T-cell (primary cell): ENCODE measurements at regions of chr2 and their contacts with region 1.

Region 1: GRCh38 chr2:171247741-171248662 is 87.3 kb upstream of the TLK1 start:
- DNase-seq: peak in 33 of 35 experiments; percentile 3 to 68 (median 35)
- ATAC-seq: peak; percentile 88 to 98 (median 96)
- H3K4me3 ChIP-seq: no peak overlapping the region
- H3K4me3 Mint-ChIP-seq: peak overlapping the region; percentile 34 to 49 (median 37)
- H3K27ac ChIP-seq: peak overlapping the region; percentile 52
- H3K27ac Mint-ChIP-seq: peak overlapping the region; percentile 75 to 90
- H3K4me1 ChIP-seq: peaks cover 18 to 20% of the 10 kb centered on the region in 2 experiments
- H3K4me1 Mint-ChIP-seq: peaks cover 45 to 51% (median 50%) of the 10 kb centered on the region in 3 donors
- H3K27me3 ChIP-seq: no peaks in the 10 kb centered on the region
- H3K27me3 Mint-ChIP-seq: no peaks in the 10 kb centered on the region

Region 2: DNA sequence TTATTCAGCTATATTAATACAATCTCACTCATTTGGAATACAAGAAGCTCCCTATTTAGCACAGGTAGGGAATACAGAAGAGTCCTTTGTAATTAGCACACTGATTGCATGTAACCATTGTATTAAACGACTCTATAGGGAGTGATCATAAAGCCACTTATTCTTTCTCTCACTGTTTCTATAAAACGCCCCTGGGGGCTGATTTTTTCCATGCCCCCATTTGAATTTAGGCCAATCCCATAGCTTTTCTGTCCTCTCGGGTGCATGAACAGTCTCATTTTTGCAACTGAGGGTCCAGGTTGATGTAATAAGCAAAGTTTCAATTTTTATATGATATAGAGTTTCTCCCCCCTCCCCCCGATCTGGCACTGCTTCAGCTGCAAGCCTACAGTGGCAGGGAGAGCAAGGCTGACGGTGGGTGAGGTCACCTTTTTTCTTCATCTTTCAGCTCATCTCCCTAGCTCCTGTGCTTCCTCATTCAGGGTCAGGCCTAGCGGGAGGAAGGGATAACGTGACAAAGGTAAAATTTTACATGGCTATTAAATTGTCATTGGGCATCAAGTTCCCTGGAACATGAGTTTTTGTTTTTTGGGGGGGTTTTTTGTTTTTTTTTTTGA is 385.6 kb before region 1 on chr2:
- CTCF ChIA-PET with region 1: no interaction called
- POLR2A ChIA-PET with region 1: no interaction called
- DNase-seq: no peak
- ATAC-seq: no peak
- H3K4me3 ChIP-seq: no peak overlapping the region
- H3K4me3 Mint-ChIP-seq: no peak overlapping the region
- H3K27ac ChIP-seq: no peak overlapping the region
- H3K27ac Mint-ChIP-seq: no peak overlapping the region
- H3K4me1 ChIP-seq: no peaks in the 10 kb centered on the region
- H3K4me1 Mint-ChIP-seq: no peaks in the 10 kb centered on the region
- H3K27me3 ChIP-seq: peaks cover 0 to 2% of the 10 kb centered on the region in 2 experiments
- H3K27me3 Mint-ChIP-seq: peaks cover 0 to 2% of the 10 kb centered on the region in 2 donors

Region 3: GRCh38 chr2:172878260-172878659 is 1630.3 kb after region 1 on chr2:
- CTCF ChIA-PET with region 1: no interaction called
- POLR2A ChIA-PET with region 1: interaction called in 1 of 2 experiments, 11 read pairs
- DNase-seq: no peak
- ATAC-seq: no peak
- H3K4me3 ChIP-seq: no peak overlapping the region
- H3K4me3 Mint-ChIP-seq: no peak overlapping the region
- H3K27ac ChIP-seq: no peak overlapping the region
- H3K27ac Mint-ChIP-seq: no peak overlapping the region
- H3K4me1 ChIP-seq: no peaks in the 10 kb centered on the region
- H3K4me1 Mint-ChIP-seq: no peaks in the 10 kb centered on the region
- H3K27me3 ChIP-seq: peaks cover 0 to 3% of the 10 kb centered on the region in 2 experiments
- H3K27me3 Mint-ChIP-seq: peaks cover 10 to 15% of the 10 kb centered on the region in 2 donors